MCF 10A (cell line): ENCODE measurements at regions of chr16 and their contacts with region 1.

Region 1: GRCh38 chr16:58264961-58265479 is 29.8 kb downstream of the PRSS54 start:
- DNase-seq: peak; percentile 86
- H3K4me3 Mint-ChIP-seq: no peak overlapping the region
- H3K27ac Mint-ChIP-seq: peak overlapping the region; percentile 98
- H3K4me1 Mint-ChIP-seq: peaks cover 19% of the 10 kb centered on the region
- H3K27me3 Mint-ChIP-seq: no peaks in the 10 kb centered on the region
- CTCF ChIP-seq: no peak

Region 2: DNA sequence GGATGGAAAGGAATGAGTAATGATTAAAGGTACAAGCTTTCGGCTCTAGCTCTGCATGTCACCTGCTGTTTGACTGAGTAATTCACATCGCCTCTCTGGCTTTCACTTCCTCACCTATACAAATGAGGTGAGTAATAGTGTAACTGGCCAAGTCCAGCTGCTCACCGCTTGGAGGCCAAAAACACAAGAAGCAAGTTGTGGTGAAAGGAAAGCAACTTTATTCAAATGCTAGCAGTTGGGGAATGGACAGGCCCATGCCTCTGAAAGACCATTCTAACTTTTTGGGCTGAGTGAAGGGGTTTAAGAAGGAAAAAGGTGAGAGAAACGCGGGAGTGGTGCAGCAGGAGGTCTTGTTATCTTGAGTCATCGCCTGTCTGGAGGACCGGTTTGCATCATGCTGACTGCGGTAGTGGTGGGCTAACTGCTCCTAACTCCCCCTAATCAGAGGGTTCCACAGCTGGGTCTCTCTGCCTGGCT is 21.5 kb before region 1 on chr16:
- CTCF ChIA-PET with region 1: interaction called, 12 read pairs
- POLR2A ChIA-PET with region 1: interaction called, 25 read pairs
- intact Hi-C with region 1: no loop called
- DNase-seq: peak; percentile 71
- H3K4me3 Mint-ChIP-seq: no peak overlapping the region
- H3K27ac Mint-ChIP-seq: no peak overlapping the region
- H3K4me1 Mint-ChIP-seq: peaks cover 5% of the 10 kb centered on the region
- H3K27me3 Mint-ChIP-seq: peaks cover 22% of the 10 kb centered on the region
- CTCF ChIP-seq: no peak

Region 3: GRCh38 chr16:58249780-58250478 is 15.1 kb before region 1 on chr16:
- CTCF ChIA-PET with region 1: interaction called, 12 read pairs
- POLR2A ChIA-PET with region 1: interaction called, 25 read pairs
- intact Hi-C with region 1: no loop called
- DNase-seq: peak; percentile 73
- H3K4me3 Mint-ChIP-seq: peak overlapping the region; percentile 85
- H3K27ac Mint-ChIP-seq: peak overlapping the region; percentile 35
- H3K4me1 Mint-ChIP-seq: no peaks in the 10 kb centered on the region
- H3K27me3 Mint-ChIP-seq: no peaks in the 10 kb centered on the region
- CTCF ChIP-seq: no peak

Region 4: GRCh38 chr16:58280836-58281301 is 15.8 kb after region 1 on chr16:
- CTCF ChIA-PET with region 1: interaction called, 5 read pairs
- POLR2A ChIA-PET with region 1: interaction called, 17 read pairs
- intact Hi-C with region 1: no loop called
- DNase-seq: peak; percentile 60
- H3K4me3 Mint-ChIP-seq: no peak overlapping the region
- H3K27ac Mint-ChIP-seq: peak overlapping the region; percentile 82
- H3K4me1 Mint-ChIP-seq: peaks cover 16% of the 10 kb centered on the region
- H3K27me3 Mint-ChIP-seq: no peaks in the 10 kb centered on the region
- CTCF ChIP-seq: no peak